ENCODE measurements at regions of chr6 and their contacts with region 1.

Region 1: DNA sequence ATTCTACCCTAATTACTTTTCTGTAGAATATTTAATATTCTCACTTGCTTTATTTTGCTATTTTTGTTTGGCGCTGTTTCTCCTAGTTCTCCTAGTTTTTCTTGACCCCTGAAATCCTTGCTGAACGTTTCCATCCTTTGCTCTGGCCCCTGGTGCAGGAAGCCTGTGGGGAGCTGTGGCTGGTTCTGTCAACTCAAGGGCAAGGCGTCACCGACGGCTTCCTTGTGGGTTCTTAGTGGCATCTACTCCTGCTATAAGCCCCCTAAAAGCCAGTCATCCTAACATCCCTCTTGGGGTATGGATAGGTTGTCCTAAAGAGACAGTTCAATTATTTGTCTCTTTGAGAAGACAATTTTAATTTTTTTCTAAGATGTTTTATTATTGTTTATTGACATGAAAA is 36.9 kb upstream of the KIF25 start:
- DNase-seq: no peak
- ATAC-seq: no peak
- H3K4me3 ChIP-seq: no peak overlapping the region
- H3K27ac ChIP-seq: no peak overlapping the region
- H3K4me1 ChIP-seq: peaks cover 0 to 18% of the 10 kb centered on the region in 2 experiments; a peak in 3 of 4 replicates
- H3K27me3 ChIP-seq: no peaks in the 10 kb centered on the region
- CTCF ChIP-seq: no peak
- POLR2A ChIP-seq: no peak
- RAD21 ChIP-seq: no peak

Region 2: GRCh38 chr6:167925026-167925425 is 35.6 kb before region 1 on chr6:
- CTCF ChIA-PET with region 1: no interaction called
- POLR2A ChIA-PET with region 1: no interaction called
- RAD21 ChIA-PET with region 1: no interaction called
- intact Hi-C with region 1: no loop called
- DNase-seq: no peak
- ATAC-seq: no peak
- H3K4me3 ChIP-seq: no peak overlapping the region
- H3K27ac ChIP-seq: no peak overlapping the region
- H3K4me1 ChIP-seq: 0 out of 4 replicates have a peak, but pooled peaks cover 0 to under 1% of the 10 kb centered on the region in 2 experiments
- H3K27me3 ChIP-seq: no peaks in the 10 kb centered on the region
- CTCF ChIP-seq: no peak
- POLR2A ChIP-seq: no peak
- RAD21 ChIP-seq: no peak

Region 3: DNA sequence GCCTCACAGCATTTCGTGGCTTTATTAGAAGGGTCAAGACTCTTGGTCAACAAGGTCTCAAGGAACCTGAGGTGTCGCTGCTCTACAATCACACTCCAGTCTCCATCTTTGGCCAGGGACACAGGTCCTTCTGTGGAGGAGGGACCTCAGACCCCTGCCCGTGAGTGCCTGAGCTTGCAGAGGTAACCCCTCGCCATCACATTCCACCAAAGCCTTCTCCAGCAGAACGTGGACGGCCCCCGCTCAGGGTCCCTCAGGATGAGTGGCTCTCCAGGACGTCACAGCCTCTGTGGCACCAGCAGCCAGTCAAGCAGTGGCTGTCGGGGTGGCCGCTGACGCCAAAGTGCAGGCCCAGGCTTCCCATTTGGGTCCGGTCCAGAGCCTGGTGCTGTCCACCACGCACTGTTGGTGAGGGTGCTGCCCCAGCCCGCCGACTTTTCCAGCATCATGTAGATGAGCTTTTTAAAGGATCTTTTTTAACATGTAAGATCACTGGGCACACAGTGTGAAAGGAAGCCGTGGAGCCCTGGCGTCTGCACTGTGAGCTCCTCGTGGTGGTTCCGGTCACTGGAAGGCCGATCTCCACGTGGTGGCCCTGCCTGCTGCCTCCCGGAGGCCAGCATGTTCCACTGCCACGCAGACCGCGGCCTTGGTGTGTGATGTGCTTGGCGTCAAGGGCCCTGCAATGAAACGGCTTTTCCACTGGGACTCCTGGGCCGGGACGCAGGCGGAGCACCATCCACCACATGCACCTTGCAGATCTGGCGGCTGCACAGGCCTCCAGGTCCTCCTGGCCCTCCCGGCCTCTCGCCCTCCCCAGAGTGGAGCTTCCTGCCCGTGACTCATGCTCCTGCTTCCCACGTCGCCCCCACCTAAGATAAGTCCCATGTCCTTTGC is 28.6 kb after region 1 on chr6:
- CTCF ChIA-PET with region 1: no interaction called
- POLR2A ChIA-PET with region 1: no interaction called
- RAD21 ChIA-PET with region 1: no interaction called
- intact Hi-C with region 1: loop called (anchors 1 kb)
- DNase-seq: no peak
- ATAC-seq: peak; percentile 32; the same call in 1 of the 2 replicates
- H3K4me3 ChIP-seq: no peak overlapping the region
- H3K27ac ChIP-seq: no peak overlapping the region
- H3K4me1 ChIP-seq: no peaks in the 10 kb centered on the region
- H3K27me3 ChIP-seq: 0 out of 2 replicates have a peak, but pooled peaks cover 3% of the 10 kb centered on the region
- CTCF ChIP-seq: no peak
- POLR2A ChIP-seq: no peak
- RAD21 ChIP-seq: no peak

Region 4: DNA sequence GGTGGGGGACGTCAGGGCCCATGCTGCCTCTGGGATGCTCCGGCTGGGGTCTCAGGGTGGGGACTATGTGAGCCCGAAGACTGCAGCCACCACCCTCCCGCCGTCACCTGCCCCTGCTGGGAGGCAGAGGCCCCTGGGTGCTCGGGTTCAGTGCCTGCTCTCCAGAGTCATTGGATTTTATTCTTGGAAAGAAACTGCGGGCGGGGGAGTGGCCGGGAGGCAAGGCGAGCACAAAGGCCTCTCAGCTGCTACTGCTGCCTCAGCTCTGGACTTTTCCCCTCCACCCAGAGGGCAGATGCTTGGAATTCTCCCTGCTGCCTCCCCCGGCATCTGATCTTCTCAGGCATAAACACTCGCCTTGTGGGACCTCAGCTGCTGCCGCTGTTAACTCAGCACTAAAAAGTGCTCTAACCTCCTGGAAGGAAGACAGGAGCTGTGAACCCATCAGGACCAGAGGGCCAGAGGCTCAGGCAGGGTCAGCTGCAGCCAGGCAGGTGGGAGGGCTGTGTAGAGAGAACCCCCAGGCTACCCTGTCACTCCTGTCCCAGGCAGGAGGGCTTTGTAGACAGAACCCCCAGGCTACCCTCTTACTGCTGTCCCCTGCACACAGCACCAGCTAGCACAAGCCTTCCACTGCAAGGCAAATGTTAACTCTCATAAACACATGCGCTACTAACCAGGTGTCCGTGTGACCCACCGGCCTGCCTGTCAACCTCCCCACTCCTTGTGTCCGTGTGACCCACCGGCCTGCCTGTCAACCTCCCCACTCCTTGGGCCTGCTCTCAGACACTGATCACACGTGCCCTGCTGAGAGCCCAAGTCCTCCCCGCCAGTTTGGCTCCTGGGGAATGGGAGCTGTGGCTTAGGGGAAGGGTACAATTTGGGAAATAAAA is 127.8 kb after region 1 on chr6:
- CTCF ChIA-PET with region 1: no interaction called
- POLR2A ChIA-PET with region 1: no interaction called
- RAD21 ChIA-PET with region 1: no interaction called
- intact Hi-C with region 1: no loop called
- DNase-seq: no peak
- ATAC-seq: no peak
- H3K4me3 ChIP-seq: no peak overlapping the region
- H3K27ac ChIP-seq: no peak overlapping the region
- H3K4me1 ChIP-seq: no peaks in the 10 kb centered on the region; a peak in 1 of 4 replicates
- H3K27me3 ChIP-seq: peaks cover 4% of the 10 kb centered on the region; the same call in 1 of the 2 replicates
- CTCF ChIP-seq: no peak
- POLR2A ChIP-seq: no peak
- RAD21 ChIP-seq: no peak

Measured in HCT116 (cell line).